WTC11 (cell line): ENCODE measurements at regions of chr17 and their contacts with region 1.

Region 1: DNA sequence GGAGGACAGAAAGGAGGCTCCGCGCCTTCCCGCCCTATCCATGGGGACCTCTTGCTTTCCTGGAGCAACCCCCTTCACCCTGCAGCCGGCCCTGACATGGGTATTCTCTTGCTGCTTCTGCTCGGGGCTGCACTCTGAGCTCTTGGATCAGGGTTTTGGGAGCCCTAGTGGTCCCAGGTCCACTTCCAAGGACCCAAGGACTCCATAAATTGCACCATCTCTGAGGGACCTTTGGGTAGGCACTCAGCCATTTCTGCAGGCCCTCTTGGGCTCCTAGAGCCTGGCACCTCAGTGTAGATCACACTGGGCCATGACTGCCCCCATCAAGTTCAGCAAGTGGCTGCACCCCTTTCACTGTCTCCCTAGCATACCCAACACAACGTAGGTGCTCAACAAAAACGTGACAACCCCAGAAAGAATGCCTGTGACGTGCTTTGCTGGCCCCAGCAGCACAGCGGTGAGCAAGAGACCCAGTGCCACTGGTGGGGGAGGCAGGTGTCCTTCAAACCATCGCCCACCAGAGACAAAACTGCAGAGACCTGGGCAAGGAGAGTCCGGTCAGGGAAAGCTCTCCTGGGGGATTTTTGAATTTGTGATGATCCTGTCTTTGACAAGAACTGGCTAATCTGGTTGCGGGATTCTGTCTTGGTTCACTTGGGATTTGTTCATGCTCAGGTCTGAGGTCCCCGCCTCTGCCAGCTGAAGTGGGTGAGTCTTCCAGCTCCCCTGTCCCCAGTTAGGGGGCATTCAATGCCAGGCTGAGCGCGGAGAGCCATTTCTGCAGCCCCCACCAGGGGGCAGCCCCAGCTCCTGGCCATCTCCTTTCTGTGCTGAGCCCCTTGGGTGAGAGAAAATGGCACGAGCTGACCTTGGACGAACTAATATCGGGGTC is 2.5 kb upstream of the RAB11FIP4 start:
- DNase-seq: peak; percentile 68
- ATAC-seq: peak; percentile 51
- H3K4me3 Mint-ChIP-seq: peak overlapping the region; percentile 76; the same call in 1 of the 2 replicates
- H3K27ac Mint-ChIP-seq: no peak overlapping the region
- H3K4me1 Mint-ChIP-seq: peaks cover 14% of the 10 kb centered on the region
- H3K27me3 Mint-ChIP-seq: peaks cover 40% of the 10 kb centered on the region
- CTCF ChIP-seq: peak; percentile 67

Region 2: GRCh38 chr17:31134576-31134975 is 254.4 kb before region 1 on chr17:
- CTCF ChIA-PET with region 1: no interaction called
- POLR2A ChIA-PET with region 1: no interaction called
- DNase-seq: no peak
- ATAC-seq: no peak
- H3K4me3 Mint-ChIP-seq: no peak overlapping the region
- H3K27ac Mint-ChIP-seq: no peak overlapping the region
- H3K4me1 Mint-ChIP-seq: peaks cover 18% of the 10 kb centered on the region
- H3K27me3 Mint-ChIP-seq: no peaks in the 10 kb centered on the region
- CTCF ChIP-seq: no peak

Region 3: GRCh38 chr17:31373150-31374093 is 15.6 kb before region 1 on chr17:
- CTCF ChIA-PET with region 1: interaction called, 42 read pairs
- POLR2A ChIA-PET with region 1: no interaction called
- DNase-seq: no peak
- ATAC-seq: peak; percentile 59
- H3K4me3 Mint-ChIP-seq: no peak overlapping the region
- H3K27ac Mint-ChIP-seq: no peak overlapping the region; the same call in 1 of the 2 replicates
- H3K4me1 Mint-ChIP-seq: peaks cover 22% of the 10 kb centered on the region
- H3K27me3 Mint-ChIP-seq: no peaks in the 10 kb centered on the region
- CTCF ChIP-seq: no peak

Region 4: DNA sequence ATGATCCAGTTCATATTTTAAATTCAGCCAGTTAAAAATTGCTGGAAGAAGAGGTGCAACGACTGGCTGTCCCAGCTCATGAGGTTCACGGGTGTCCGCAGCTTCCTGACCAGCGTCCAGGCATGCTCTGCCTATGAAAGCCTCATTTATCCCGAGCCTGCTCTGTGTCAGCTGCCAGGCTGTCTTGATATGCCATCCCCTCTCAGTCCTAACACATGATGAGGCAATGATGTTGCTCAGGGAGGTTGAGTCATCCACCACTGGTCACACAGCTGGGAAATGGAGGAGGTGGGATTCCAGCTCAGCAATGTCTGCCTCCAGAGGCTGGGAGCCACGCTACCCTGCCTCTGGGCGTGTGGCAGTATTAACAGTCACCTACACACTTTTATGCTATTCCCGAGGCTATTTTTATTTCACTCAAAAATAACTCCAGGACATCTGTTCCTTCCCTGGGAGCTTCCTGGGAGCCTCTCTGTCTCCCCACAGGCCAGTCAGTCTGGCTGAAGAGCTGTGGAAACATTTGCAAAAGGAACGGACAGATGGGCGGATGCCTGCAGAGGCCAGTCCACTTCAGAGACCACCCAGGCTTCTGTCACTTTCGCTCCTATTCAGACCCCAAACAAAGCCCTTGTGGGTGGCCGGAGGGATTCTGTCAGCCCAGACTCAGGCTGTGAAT is 25.0 kb after region 1 on chr17:
- CTCF ChIA-PET with region 1: interaction called, 34 read pairs
- POLR2A ChIA-PET with region 1: no interaction called
- DNase-seq: no peak
- ATAC-seq: no peak
- H3K4me3 Mint-ChIP-seq: no peak overlapping the region
- H3K27ac Mint-ChIP-seq: no peak overlapping the region
- H3K4me1 Mint-ChIP-seq: peaks cover 21% of the 10 kb centered on the region
- H3K27me3 Mint-ChIP-seq: no peaks in the 10 kb centered on the region; the same call in 1 of the 2 replicates
- CTCF ChIP-seq: no peak

Region 5: DNA sequence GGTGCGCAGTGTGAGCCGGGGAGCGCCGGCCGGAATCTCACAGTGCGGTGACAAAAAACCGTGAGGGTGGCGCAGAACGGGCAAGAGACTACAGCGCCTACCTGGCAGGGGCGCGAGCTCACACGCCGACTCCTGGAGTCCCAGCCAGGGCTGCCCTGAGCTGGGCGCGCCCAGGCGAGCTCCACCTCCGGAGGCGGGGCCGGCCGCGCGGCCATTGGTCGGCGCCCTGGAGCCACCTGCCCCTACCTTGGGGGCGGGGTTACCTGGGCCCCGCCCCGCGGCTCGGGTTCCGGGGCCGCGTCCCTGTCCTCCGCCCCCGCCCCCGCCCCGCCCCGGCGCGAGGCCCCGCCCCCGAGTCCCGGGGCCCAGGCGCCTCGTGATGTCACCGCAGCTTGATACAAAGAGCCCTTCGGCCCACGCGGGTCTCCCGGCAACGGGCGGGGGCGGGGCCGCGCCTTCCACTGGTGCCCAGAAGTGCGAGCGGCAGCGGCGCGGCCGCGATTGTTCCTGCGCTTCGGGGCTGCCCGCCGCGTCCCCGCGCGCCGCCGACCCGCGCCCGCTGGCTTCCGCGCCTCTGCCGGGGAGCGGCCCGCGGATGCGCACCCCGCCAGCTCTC is 98.7 kb after region 1 on chr17:
- CTCF ChIA-PET with region 1: interaction called, 12 read pairs
- POLR2A ChIA-PET with region 1: interaction called, 4 read pairs
- DNase-seq: peak; percentile 96
- ATAC-seq: peak; percentile 90
- H3K4me3 Mint-ChIP-seq: peak overlapping the region; percentile 83
- H3K27ac Mint-ChIP-seq: peak overlapping the region; percentile 89
- H3K4me1 Mint-ChIP-seq: peaks cover 40% of the 10 kb centered on the region
- H3K27me3 Mint-ChIP-seq: no peaks in the 10 kb centered on the region; the same call in 1 of the 2 replicates
- CTCF ChIP-seq: no peak

Region 6: DNA sequence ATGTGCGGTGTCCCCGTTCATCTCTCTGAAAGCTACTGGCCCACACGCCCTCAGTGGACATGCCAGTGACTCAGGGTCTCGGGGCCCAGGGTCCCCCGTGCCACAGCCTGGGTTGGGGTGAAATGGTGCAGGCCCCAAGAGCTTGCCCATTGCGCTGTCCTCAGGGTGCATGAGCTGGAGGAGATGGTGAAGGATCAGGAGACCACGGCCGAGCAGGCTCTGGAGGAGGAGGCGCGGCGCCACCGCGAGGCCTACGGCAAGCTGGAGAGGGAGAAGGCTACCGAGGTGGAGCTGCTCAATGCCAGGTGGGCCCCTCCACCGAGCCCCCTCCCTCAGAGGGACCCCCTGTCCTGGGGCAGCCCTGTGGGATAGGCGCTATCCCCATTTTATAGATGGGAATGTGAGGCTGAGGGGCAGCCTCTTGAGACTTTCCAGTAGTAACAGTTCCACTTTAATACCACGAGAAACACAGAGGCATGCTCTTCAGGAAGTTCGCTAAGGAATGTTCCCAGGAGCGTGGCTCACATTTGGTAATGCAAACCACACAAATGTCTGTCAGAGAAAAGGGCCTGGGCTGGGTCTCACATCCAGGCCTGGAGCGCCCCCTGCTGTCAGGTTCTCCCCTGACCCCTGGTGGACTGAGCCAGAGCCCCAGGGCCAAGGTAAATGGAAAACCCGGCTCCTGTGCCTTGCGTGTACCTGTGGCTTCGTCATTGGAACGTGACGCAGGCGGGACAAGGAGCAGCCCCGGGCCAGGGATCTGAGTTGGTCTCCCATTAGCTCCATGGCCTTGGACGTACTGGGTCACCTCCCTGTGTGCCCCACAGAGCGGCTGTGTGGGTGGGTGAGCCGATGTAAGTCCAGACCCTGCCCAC is 136.1 kb after region 1 on chr17:
- CTCF ChIA-PET with region 1: interaction called, 29 read pairs
- POLR2A ChIA-PET with region 1: no interaction called
- DNase-seq: peak; percentile 97
- ATAC-seq: peak; percentile 90
- H3K4me3 Mint-ChIP-seq: no peak overlapping the region
- H3K27ac Mint-ChIP-seq: no peak overlapping the region
- H3K4me1 Mint-ChIP-seq: no peaks in the 10 kb centered on the region
- H3K27me3 Mint-ChIP-seq: no peaks in the 10 kb centered on the region
- CTCF ChIP-seq: peak; percentile 83

Region 7: GRCh38 chr17:31842183-31843069 is 453.4 kb after region 1 on chr17:
- CTCF ChIA-PET with region 1: interaction called, 17 read pairs
- POLR2A ChIA-PET with region 1: no interaction called
- DNase-seq: peak; percentile 81
- ATAC-seq: peak; percentile 97
- H3K4me3 Mint-ChIP-seq: no peak overlapping the region
- H3K27ac Mint-ChIP-seq: no peak overlapping the region
- H3K4me1 Mint-ChIP-seq: no peaks in the 10 kb centered on the region
- H3K27me3 Mint-ChIP-seq: peaks cover 5% of the 10 kb centered on the region; the same call in 1 of the 2 replicates
- CTCF ChIP-seq: peak; percentile 79